ENCODE measurements at regions of chr9 and their contacts with region 1.

Region 1: DNA sequence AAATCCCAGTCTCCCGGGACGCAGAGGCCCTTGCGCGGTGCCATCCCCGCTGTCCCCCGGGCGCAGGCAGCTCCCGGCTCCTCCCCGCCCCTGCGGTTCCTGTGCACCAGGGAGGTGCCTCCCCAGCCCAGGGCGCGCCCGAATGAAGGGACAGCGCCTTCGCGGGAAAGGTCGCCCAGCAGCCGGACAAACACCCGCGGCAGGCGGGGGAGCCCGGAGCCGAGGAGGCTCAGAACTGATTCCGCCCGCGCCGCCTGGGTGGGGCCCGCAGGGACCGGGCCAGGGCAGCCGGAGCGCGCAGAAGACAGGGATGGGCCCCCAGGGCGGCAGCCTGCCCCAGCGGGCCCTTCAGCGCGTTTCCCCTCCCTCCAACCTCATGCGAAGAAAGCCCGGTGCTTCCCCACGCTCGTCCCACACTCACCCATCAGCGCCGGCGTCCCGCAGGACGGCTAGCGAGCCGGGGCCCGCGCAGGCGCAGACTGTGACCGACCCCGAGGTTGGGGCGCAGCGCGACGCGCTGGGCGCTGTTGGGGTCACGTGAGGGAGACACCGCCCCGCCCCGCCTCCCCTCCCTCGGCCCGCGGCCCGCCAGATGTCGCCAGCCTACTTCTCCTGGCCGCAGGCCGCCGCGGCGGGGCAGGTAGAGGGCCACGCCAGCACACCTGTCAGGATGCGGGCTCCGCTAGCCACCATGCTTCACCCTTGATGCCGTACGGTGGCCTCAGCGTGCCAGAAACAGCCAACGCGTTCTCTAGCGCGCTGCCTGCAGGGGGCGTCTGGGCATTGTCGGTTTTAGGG is at the start of gene SLC25A51:
- DNase-seq: peak; percentile 74 to 97
- H3K4me3 ChIP-seq: peak within 1 kb of the TSS; percentile 88 to 95
- H3K27ac ChIP-seq: peak within 1 kb of the TSS; percentile 81 to 84
- H3K4me1 ChIP-seq: peaks cover 3 to 12% of the 10 kb centered on the region in 2 donors
- H3K27me3 ChIP-seq: no peaks in the 10 kb centered on the region
- CTCF ChIP-seq: peak; percentile 83 to 98 (median 92)
- total RNA-seq, gene SLC25A51: 5.9 TPM

Region 2: GRCh38 chr9:37753489-37754190 is 150.2 kb before region 1 on chr9 and contains the start of gene TRMT10B:
- intact Hi-C with region 1: loop called (anchors 5 kb)
- DNase-seq: peak in 1 of 2 donors; percentile 73
- H3K4me3 ChIP-seq: peak within 1 kb of the TSS; percentile 70 to 83
- H3K27ac ChIP-seq: peak within 1 kb of the TSS; percentile 83 to 90
- H3K4me1 ChIP-seq: peaks cover 0 to 9% of the 10 kb centered on the region in 2 donors
- H3K27me3 ChIP-seq: no peaks in the 10 kb centered on the region
- CTCF ChIP-seq: peak in 1 of 3 experiments; percentile 4
- total RNA-seq, gene TRMT10B: 0.53 TPM

Region 3: GRCh38 chr9:38017149-38017884 is 113.5 kb after region 1 on chr9:
- intact Hi-C with region 1: loop called (anchors 2 kb)
- DNase-seq: peak in 1 of 2 donors; percentile 83
- H3K4me3 ChIP-seq: peak overlapping the region in 1 of 2 donors; percentile 41
- H3K27ac ChIP-seq: peak overlapping the region; percentile 58
- H3K4me1 ChIP-seq: peaks cover 29 to 42% of the 10 kb centered on the region in 2 donors
- H3K27me3 ChIP-seq: no peaks in the 10 kb centered on the region
- CTCF ChIP-seq: peak; percentile 50 to 55 (median 52)

Region 4: GRCh38 chr9:38160613-38161215 is 256.9 kb after region 1 on chr9:
- intact Hi-C with region 1: loop called (anchors 2 kb)
- DNase-seq: peak in 1 of 2 donors; percentile 70
- H3K4me3 ChIP-seq: no peak overlapping the region
- H3K27ac ChIP-seq: no peak overlapping the region
- H3K4me1 ChIP-seq: no peaks in the 10 kb centered on the region
- H3K27me3 ChIP-seq: no peaks in the 10 kb centered on the region
- CTCF ChIP-seq: peak; percentile 57 to 70 (median 69)

Region 5: DNA sequence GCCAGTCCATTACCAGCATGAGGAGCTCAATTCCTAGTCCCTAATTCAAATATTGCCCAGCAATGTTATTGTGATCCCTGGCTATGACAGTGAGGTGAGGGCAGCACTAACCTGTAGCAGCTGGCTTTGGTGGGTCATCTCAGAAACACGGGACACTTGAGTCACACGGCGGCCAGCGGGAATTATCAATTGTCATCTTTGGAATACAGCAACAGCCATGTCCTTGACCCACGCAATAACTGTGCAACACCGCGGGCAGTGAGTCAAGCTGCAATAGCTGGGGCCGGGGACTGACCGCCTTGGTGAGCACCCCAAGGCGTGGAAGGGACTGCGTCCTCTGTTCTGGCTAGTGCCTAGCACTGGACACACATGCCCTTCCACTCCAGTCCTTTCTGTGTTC is 426.1 kb after region 1 on chr9:
- intact Hi-C with region 1: no loop called
- DNase-seq: no peak
- H3K4me3 ChIP-seq: no peak overlapping the region
- H3K27ac ChIP-seq: no peak overlapping the region
- H3K4me1 ChIP-seq: no peaks in the 10 kb centered on the region
- H3K27me3 ChIP-seq: no peaks in the 10 kb centered on the region
- CTCF ChIP-seq: no peak

Region 6: DNA sequence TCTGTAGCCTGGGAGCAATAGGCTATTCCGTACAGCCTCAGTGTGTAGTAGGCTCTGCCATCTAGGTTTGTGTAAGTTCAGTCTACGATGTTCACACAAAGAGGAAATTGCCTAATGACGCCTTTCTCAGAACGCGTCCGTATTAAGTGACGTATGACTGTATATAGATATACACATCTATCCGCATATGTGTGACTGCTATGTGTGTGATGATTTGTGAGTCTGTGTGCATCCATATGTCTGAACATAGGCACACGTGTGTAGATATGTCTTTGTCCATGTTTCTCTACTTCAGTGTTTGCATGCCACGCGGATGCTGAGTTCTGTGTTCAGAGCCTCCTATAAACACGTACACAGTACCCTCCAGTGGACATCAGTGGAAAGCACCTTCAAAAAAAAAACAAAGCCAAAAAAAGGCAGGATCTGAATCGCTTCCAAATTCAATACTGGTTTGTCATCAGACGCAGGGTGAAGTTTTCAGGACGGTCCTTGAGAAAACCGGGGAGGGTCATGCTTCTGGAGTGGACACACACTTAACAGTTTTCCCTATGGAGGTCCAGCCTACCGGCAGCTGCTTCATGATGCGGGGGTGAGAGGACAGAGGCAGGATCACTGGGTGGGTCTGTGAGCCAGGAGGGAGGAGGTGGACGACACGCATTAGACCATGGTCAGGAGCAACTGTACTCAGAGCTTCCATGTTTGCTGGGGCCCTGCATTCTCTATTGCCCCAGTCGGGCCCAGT is 459.2 kb after region 1 on chr9:
- intact Hi-C with region 1: loop called (anchors 1 kb)
- DNase-seq: peak in 1 of 2 donors; percentile 72
- H3K4me3 ChIP-seq: peak overlapping the region in 1 of 2 donors; percentile 50
- H3K27ac ChIP-seq: no peak overlapping the region
- H3K4me1 ChIP-seq: peaks cover 0 to 3% of the 10 kb centered on the region in 2 donors
- H3K27me3 ChIP-seq: no peaks in the 10 kb centered on the region
- CTCF ChIP-seq: peak; percentile 52 to 73 (median 58)

Region 7: DNA sequence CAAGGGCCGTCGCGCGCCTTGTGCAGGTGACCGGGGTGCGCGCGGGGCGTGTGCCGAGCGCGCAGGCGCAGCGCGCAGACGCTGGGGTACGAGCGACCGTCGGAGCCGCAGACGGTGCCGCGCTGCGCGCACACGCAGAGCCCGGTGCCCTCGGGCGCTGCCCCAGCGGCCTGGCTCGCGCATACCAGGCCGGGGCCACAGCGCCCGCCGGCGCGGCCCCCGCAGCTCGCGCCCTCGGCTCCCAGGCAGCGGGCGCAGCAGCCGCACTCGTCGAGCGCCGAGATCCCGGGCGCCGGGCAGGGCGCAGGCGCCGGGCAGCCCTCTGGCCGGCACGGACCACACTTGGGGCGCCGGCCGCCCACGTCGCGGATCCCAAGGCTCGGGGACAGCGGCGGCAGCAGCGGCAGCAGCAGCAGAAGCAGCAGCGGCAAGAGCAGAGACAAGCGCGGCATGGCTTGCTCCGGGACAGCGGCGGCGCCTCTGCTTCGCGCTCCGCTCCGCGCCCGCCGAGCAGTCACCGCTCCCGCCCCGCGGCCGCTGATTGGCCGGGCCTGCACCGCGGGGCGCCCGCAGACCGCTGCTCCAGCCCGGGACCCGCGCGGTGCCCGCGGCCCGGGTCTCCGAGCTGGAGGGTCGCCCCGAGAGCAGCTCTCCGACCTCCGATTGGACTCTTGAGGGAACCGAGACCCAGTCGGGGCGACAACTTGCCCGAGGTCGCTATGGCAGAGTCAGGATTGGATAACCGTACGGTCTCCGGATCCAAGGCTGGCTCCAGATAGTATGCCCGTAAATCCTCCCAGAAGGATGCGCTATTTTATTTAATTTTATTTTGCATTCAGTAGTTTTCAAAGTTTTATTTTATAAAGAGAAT is 520.4 kb after region 1 on chr9 and contains the start of gene IGFBPL1:
- intact Hi-C with region 1: loop called (anchors 10 kb)
- DNase-seq: peak in 1 of 2 donors; percentile 65
- H3K4me3 ChIP-seq: peak within 1 kb of the TSS; percentile 69 to 75
- H3K27ac ChIP-seq: peak within 1 kb of the TSS; percentile 68 to 82
- H3K4me1 ChIP-seq: peaks cover 0 to 12% of the 10 kb centered on the region in 2 donors
- H3K27me3 ChIP-seq: no peaks in the 10 kb centered on the region
- CTCF ChIP-seq: no peak
- total RNA-seq, gene IGFBPL1: 4.8 TPM

Measured in ascending aorta (tissue), 2 donors.